Caco-2 (cell line): ENCODE measurements at regions of chr14 and their contacts with region 1.

Region 1: DNA sequence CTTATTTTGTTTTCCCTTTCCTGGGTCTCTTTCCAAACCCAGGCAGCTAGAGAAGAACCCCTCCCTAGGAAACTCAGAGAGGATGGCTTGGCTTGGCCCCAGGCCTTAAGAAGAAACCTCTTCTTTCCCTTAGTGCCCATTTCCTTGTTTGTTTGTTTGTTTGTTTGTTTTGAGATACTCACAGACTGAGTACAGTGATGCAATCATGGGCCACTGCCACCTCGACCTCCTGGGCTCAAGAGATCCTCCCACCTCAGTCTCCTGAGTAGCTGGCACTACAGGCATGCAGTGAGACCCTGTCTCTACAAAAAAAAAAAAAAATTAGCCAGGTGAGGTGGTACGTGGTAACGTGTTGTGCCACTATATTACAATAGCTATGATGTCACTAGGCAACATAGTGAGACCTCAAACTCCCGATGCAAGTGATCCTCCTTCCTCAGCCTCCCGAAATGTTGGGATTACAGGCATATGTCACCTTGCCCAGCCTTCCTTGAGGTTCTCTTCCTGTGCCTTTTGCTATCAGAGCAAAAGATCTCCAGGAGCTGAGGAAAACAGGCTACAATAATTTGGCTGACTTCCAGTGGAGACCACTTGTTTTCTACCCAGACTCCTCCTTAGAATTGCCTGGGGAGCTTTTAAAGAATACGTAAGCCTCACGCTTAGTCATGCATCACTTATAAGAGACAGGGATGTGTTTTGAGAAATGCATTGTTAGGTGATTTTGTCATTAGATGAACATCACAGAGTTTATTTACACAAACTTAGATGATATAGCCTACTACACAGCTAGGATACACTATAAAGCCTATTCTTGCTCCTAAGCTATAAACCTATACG is 34.5 kb upstream of the LGALS3 start:
- DNase-seq: no peak
- H3K4me3 ChIP-seq: no peak overlapping the region
- H3K4me3 Mint-ChIP-seq: no peak overlapping the region
- H3K27ac Mint-ChIP-seq: no peak overlapping the region
- H3K4me1 ChIP-seq: peaks cover 15% of the 10 kb centered on the region
- H3K4me1 Mint-ChIP-seq: peaks cover 7% of the 10 kb centered on the region
- H3K27me3 ChIP-seq: no peaks in the 10 kb centered on the region
- H3K27me3 Mint-ChIP-seq: no peaks in the 10 kb centered on the region
- CTCF ChIP-seq: no peak

Region 2: DNA sequence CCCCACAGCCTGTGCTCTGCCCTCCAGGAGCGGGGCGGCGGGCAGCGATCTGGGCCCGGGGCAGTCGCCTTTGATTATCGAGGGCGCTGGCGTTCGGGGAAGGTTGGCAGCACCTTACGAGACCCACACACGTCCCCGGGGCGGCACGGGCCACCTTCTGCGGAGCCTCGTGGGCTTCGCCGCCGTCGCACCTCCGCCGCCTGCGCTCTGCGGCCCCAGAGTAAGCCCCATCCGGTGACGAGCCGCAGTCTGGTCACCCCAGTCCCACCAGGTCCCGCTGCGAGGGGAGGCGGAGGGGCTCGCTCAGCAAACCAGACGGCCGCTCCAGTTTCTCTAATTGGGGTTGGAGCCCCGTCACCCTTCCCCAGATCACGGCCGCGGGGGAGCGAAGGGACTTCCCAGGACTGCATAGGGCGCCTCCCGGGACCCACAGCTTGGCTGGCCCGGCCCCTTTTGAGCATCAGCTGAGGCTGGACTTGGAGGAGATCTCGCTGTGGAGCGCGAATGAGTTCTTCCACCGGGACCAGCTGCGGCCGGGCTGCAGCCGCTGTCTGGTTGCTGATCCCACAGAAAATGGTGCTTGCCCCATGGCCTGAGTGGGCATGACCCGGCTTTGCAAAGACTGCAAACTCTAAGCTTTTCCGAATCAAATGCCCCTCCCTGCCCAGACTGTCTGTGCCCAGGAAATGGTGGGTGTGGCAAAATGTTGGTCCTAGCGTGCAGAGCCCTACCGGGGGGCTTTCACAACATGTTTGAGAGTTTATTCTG is 35.1 kb after region 1 on chr14:
- CTCF ChIA-PET with region 1: interaction called, 10 read pairs
- POLR2A ChIA-PET with region 1: interaction called, 3 read pairs
- intact Hi-C with region 1: loop called (anchors 1 kb)
- DNase-seq: peak; percentile 66 to 74
- H3K4me3 ChIP-seq: peak overlapping the region; percentile 96
- H3K4me3 Mint-ChIP-seq: peak overlapping the region; percentile 89
- H3K27ac Mint-ChIP-seq: peak overlapping the region; percentile 83
- H3K4me1 ChIP-seq: peaks cover 65% of the 10 kb centered on the region
- H3K4me1 Mint-ChIP-seq: peaks cover 18% of the 10 kb centered on the region
- H3K27me3 ChIP-seq: no peaks in the 10 kb centered on the region
- H3K27me3 Mint-ChIP-seq: no peaks in the 10 kb centered on the region
- CTCF ChIP-seq: no peak

Region 3: DNA sequence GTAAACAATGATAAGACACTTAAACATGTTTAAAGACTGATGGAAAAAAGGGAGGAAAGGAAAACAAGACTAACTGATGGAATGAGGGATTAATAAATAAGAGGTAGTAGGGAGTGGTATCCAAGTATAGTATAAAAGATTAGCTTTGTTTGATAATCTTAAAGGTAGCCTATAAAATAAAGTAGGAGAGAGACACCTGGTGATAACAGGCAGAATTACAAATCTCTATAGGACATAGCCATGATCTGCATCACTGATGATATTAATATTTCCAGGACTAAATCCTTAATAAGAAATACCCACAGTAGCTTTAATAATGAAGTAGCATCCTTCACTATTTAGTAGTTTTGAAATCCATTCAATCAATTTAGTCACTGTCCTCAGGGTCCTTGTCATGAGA is 66.5 kb after region 1 on chr14:
- CTCF ChIA-PET with region 1: interaction called, 8 read pairs
- POLR2A ChIA-PET with region 1: no interaction called
- intact Hi-C with region 1: loop called (anchors 1 kb)
- DNase-seq: no peak
- H3K4me3 ChIP-seq: no peak overlapping the region
- H3K4me3 Mint-ChIP-seq: no peak overlapping the region
- H3K27ac Mint-ChIP-seq: no peak overlapping the region
- H3K4me1 ChIP-seq: no peaks in the 10 kb centered on the region
- H3K4me1 Mint-ChIP-seq: no peaks in the 10 kb centered on the region
- H3K27me3 ChIP-seq: no peaks in the 10 kb centered on the region
- H3K27me3 Mint-ChIP-seq: no peaks in the 10 kb centered on the region
- CTCF ChIP-seq: peak; percentile 39 to 42